HEK293T (cell line): ENCODE measurements at regions of chr6 and their contacts with region 1.

Region 1: DNA sequence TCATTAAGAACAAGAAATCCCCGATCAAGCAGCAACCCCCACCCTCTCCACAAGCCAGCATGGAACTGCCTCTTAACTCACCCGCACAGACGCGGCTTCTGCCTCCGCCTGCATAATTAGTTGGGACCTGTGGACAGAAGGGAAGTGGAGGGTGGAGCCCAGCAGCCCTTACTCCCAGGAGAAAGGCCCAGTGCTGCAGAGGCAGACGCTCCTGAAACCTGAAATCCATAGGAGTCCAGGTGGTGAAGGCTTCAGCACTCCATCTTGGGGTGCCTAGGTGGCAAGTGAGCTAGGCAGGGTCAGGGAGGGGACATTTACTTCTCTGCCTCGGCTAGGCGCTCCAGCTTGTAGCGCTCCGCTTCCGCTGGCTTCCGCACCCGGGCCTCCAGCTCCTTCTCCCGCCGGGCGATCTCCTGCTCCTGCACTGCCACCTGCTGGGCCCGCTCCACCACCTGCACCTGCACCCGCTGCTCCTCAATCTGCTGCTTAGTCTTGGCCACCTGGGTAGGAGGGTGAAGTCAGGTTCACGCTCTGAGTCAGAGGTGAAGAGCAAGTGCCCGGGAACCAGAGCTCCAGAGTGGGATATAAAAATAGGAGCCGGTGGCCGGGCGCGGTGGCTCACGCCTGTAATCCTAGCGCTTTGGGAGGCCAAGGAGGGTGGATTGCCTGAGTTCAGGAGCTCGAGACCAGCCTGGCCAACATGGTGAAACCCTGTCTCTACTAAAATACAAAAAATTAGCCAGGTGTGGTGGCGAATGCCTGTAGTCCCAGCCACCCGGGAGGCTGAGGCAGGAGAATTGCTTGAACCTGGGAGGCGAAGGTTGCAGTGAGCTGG is 10.7 kb downstream of the TUBB start:
- DNase-seq: peak; percentile 72

Region 2: DNA sequence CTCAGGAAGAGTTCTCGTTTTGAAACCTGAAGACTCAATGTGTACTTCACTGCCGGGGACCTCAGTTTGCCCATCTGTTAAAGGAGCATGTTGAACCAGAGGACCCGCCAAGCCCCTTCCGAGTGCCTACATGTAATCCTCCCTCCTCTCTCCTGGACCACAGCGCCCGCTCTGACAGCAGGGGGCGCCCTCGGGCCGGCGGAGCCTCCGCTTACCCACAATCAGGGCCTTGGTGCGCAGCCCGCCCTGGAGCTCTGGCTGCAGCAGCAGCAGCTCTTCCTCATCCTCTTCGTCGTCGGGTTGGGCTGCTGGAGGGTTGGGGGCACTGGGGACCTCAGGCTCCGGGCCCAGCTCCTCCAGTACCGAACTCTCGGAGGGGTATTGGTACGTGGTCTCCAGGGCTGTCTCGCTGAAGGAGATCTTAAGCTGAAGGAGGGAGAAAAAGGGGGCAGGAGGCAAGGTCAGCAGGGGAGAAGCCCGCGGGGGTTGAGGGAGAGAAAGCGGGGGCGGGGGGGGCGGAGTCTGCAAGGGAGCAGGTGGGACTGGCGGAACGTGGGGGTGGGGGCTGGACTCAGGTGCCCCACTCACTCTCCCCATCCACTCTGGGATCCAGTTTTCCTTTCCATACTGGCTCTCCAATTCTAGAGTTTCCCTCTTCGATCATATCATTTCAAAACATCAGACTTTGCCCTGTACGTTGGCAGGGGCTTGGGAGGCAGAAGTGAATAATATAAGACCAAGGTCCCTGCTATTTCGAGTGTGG is 51.7 kb before region 1 on chr6:
- CTCF ChIA-PET with region 1: interaction called, 88 read pairs
- POLR2A ChIA-PET with region 1: interaction called, 22 read pairs
- DNase-seq: peak; percentile 85

Region 3: GRCh38 chr6:30769088-30769852 is 38.5 kb after region 1 on chr6:
- CTCF ChIA-PET with region 1: no interaction called
- POLR2A ChIA-PET with region 1: no interaction called
- DNase-seq: peak; percentile 40

Region 4: GRCh38 chr6:30926644-30927043 is 195.8 kb after region 1 on chr6:
- CTCF ChIA-PET with region 1: no interaction called
- POLR2A ChIA-PET with region 1: no interaction called
- DNase-seq: no peak